CD4-positive, alpha-beta memory T cell (primary cell): ENCODE measurements at regions of chr15 and their contacts with region 1.

Region 1: DNA sequence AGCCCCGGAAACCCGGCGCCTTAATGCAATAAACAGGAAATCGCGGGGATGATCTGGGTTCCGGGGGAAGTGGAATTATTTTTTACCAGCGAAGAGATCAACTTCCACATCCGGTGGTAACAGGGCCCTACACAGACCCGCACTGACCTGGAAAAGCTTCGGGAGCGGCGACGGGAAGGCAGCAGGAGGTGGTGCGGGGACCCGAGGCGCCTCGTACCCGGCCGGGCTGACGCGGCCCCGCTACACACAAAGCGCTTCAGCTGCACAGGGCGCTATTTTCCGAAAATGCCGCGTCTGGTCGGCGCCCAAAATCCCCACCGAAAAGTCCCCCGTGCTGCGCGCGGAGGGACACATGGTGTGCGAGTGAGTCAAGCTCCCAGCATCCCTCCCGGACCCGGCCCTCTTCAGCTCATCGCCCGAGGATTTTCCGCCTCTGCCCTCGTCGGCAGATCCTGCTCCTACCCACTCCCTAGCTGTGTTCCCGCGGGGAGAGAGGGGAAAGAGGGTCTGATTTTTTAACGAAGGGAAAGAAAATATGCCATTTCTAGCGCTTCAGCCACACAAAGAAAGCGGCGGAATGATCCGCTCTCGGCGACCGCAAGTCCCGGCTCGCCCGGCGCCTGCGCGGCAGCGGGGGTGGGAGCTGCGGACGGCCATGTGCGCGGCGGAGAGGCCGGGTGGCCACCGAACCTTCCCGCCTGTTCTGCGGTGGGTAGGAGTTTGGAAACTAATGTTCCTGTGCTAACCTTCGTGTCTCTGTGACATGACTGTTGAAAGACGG is at the start of gene GABPB1:
- DNase-seq: peak; percentile 87 to 93 (median 92)
- H3K4me3 ChIP-seq: peak within 1 kb of the TSS; percentile 80 to 95
- H3K4me3 Mint-ChIP-seq: peak within 1 kb of the TSS; percentile 97 to 100 (median 99)
- H3K27ac ChIP-seq: peak within 1 kb of the TSS; percentile 99
- H3K27ac Mint-ChIP-seq: peak within 1 kb of the TSS; percentile 99 to 100 (median 99)
- H3K4me1 ChIP-seq: peaks cover 56% of the 10 kb centered on the region
- H3K4me1 Mint-ChIP-seq: peaks cover 38 to 77% (median 46%) of the 10 kb centered on the region in 4 donors
- H3K27me3 ChIP-seq: no peaks in the 10 kb centered on the region
- H3K27me3 Mint-ChIP-seq: peaks cover 0 to 2% of the 10 kb centered on the region in 2 donors
- total RNA-seq, gene GABPB1: 15.1 to 17.0 TPM

Region 2: GRCh38 chr15:48877630-48878595 is 1477.1 kb before region 1 on chr15 and contains the start of gene EID1:
- CTCF ChIA-PET with region 1: no interaction called
- POLR2A ChIA-PET with region 1: interaction called, 19 read pairs
- intact Hi-C with region 1: loop called (anchors 5 kb)
- DNase-seq: peak; percentile 93 to 95 (median 94)
- H3K4me3 ChIP-seq: peak within 1 kb of the TSS; percentile 74 to 96
- H3K4me3 Mint-ChIP-seq: peak within 1 kb of the TSS; percentile 96 to 100 (median 98)
- H3K27ac ChIP-seq: peak within 1 kb of the TSS; percentile 71
- H3K27ac Mint-ChIP-seq: peak within 1 kb of the TSS; percentile 97 to 100 (median 99)
- H3K4me1 ChIP-seq: peaks cover 26% of the 10 kb centered on the region
- H3K4me1 Mint-ChIP-seq: peaks cover 18 to 31% (median 24%) of the 10 kb centered on the region in 4 donors
- H3K27me3 ChIP-seq: no peaks in the 10 kb centered on the region
- H3K27me3 Mint-ChIP-seq: peaks cover 3 to 4% of the 10 kb centered on the region in 2 donors
- total RNA-seq, gene EID1: 76.0 to 91.2 TPM

Region 3: DNA sequence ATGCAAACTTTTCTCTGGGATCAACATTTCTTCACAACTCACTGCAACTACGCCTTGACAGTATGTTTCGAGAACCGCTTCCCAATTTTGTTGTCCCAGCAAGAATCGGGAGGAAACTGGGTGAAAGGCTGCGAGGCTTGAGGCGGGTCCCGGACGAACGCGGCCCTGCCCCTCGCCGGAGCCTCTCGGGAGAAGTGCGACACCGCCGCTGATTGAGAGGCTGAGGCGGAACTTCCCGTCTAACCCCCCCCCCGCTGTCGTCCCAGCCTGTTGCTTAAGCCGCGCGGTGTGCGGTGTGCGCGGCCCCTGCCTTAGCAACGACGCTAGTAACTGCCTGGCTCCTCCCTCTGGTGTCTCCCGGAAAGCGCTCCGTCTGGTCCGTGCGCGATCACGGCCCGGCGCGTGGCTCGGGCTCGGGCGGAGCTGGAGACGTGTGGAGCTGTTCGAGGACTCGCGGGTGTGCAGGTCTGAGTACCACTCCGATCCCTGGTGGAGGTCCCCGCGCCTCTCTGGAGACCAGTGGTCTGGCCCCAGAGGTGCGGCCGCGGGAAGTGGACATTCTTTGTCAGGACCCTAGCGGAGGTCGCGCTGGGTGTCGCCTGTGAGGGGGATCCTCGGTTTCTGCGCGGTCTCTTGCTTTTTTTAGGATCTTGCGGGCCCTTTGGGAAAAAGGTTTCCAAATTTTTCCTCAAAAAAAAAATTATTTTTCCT is 734.2 kb before region 1 on chr15 and contains the starts of genes DTWD1 and FAM227B:
- CTCF ChIA-PET with region 1: no interaction called
- POLR2A ChIA-PET with region 1: interaction called, 23 read pairs
- intact Hi-C with region 1: loop called (anchors 1 kb)
- DNase-seq: peak; percentile 92 to 96 (median 93)
- H3K4me3 ChIP-seq: peak within 1 kb of the TSS; percentile 80 to 92
- H3K4me3 Mint-ChIP-seq: peak within 1 kb of the TSS; percentile 95 to 99 (median 98)
- H3K27ac ChIP-seq: peak within 1 kb of the TSS; percentile 71
- H3K27ac Mint-ChIP-seq: peak within 1 kb of the TSS; percentile 98 to 99 (median 99)
- H3K4me1 ChIP-seq: peaks cover 22% of the 10 kb centered on the region
- H3K4me1 Mint-ChIP-seq: peaks cover 25 to 51% (median 37%) of the 10 kb centered on the region in 4 donors
- H3K27me3 ChIP-seq: no peaks in the 10 kb centered on the region
- H3K27me3 Mint-ChIP-seq: no peaks in the 10 kb centered on the region
- total RNA-seq, gene DTWD1: 28.7 to 29.9 TPM
- total RNA-seq, gene FAM227B: 11.5 to 13.6 TPM

Region 4: GRCh38 chr15:50055332-50055731 is 299.7 kb before region 1 on chr15:
- CTCF ChIA-PET with region 1: no interaction called
- POLR2A ChIA-PET with region 1: no interaction called
- intact Hi-C with region 1: no loop called
- DNase-seq: no peak
- H3K4me3 ChIP-seq: no peak overlapping the region
- H3K4me3 Mint-ChIP-seq: no peak overlapping the region
- H3K27ac ChIP-seq: no peak overlapping the region
- H3K27ac Mint-ChIP-seq: no peak overlapping the region
- H3K4me1 ChIP-seq: no peaks in the 10 kb centered on the region
- H3K4me1 Mint-ChIP-seq: no peaks in the 10 kb centered on the region
- H3K27me3 ChIP-seq: no peaks in the 10 kb centered on the region
- H3K27me3 Mint-ChIP-seq: peaks cover 3 to 6% of the 10 kb centered on the region in 2 donors

Region 5: DNA sequence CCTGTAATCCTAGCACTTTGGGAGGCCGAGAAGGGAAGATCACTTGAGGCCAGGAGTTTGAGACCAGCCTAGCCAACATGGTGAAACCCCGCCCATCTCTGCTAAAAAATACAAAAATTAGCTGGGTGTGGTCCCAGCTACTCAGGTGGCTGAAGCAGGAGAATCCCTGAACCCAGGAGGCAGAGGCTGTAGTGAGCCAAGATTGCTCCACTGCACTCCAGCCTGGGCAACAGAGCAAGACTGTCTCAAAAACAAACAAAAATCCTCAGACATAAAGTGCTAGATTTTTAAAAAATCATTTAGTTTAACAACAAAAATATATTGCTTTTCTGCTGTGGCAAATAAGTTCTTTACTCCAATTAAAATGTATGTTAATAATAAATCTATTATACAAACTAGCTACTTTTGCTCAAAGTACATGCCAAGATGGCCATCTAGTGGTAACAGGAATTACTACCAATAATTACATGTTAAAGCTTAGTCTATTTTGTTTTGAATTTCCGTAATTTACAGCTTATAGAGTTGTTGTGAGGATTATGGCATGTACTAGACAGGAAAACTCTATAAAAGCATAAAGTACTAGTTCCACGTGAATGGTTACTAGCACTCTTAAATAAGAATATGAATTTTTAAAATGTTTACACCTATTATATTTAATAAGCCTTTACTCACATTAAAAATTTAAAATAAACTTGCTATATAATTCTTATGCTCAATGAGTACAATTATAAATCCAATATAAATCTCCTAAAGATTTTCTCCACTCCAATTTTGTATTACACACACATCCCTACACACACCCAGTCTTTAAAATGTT is 39.0 kb before region 1 on chr15:
- CTCF ChIA-PET with region 1: interaction called, 9 read pairs
- POLR2A ChIA-PET with region 1: interaction called, 20 read pairs
- intact Hi-C with region 1: loop called (anchors 1 kb)
- DNase-seq: peak in 4 of 5 donors; percentile 35 to 50 (median 42)
- H3K4me3 ChIP-seq: no peak overlapping the region
- H3K4me3 Mint-ChIP-seq: no peak overlapping the region
- H3K27ac ChIP-seq: no peak overlapping the region
- H3K27ac Mint-ChIP-seq: no peak overlapping the region
- H3K4me1 ChIP-seq: peaks cover 17% of the 10 kb centered on the region
- H3K4me1 Mint-ChIP-seq: peaks cover 15 to 21% (median 17%) of the 10 kb centered on the region in 4 donors
- H3K27me3 ChIP-seq: no peaks in the 10 kb centered on the region
- H3K27me3 Mint-ChIP-seq: no peaks in the 10 kb centered on the region

Region 6: DNA sequence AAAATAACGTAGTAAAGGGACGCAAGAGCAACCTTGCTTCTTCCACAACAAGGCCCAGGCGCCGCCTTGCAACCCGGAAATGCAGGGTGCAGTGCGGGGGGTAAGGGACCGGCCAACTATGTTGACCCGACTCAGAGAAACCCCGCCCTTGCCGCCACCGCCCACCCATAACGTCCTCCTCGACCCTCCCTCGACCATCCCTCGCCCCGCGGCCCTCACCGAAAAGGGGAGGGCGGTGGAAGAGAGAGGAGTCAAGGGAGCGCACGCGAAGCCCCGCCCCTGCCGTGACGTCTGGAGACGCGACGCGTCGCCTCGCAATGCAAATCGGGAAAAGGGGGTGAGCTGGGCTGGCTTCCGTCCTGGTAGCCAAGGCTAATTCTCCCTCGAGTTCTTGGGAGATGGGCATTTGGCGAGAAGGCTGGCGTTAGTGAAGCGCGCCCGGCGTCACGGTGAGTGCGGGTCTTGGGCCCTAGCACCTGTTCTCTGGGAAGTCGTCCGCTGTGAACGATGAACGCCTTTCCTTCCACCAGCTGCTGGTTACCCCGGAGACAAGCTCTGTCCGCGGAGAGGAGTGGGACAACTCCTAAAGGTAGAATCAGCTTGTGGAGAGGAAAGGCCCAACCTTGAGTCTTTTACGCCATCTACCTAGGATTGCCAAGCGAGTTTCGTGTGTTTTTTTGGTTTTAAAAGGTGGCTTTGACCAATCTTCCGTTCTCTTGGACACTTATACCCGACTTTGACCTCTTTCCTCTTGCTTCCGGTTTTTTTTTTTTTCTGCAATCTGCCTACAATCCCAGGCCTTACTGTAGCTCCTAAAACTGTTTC is 69.2 kb after region 1 on chr15 and contains the start of gene USP8:
- CTCF ChIA-PET with region 1: no interaction called
- POLR2A ChIA-PET with region 1: interaction called, 143 read pairs
- intact Hi-C with region 1: loop called (anchors 1 kb)
- DNase-seq: peak; percentile 90 to 93 (median 92)
- H3K4me3 ChIP-seq: peak within 1 kb of the TSS; percentile 99
- H3K4me3 Mint-ChIP-seq: peak within 1 kb of the TSS; percentile 96 to 100 (median 98)
- H3K27ac ChIP-seq: peak within 1 kb of the TSS; percentile 94
- H3K27ac Mint-ChIP-seq: peak within 1 kb of the TSS; percentile 98 to 100 (median 99)
- H3K4me1 ChIP-seq: peaks cover 32% of the 10 kb centered on the region
- H3K4me1 Mint-ChIP-seq: peaks cover 13 to 53% (median 32%) of the 10 kb centered on the region in 4 donors
- H3K27me3 ChIP-seq: no peaks in the 10 kb centered on the region
- H3K27me3 Mint-ChIP-seq: no peaks in the 10 kb centered on the region
- total RNA-seq, gene USP8: 68.9 to 70.9 TPM

Region 7: GRCh38 chr15:50484781-50485180 is 129.8 kb after region 1 on chr15:
- CTCF ChIA-PET with region 1: no interaction called
- POLR2A ChIA-PET with region 1: no interaction called
- intact Hi-C with region 1: no loop called
- DNase-seq: no peak
- H3K4me3 ChIP-seq: no peak overlapping the region
- H3K4me3 Mint-ChIP-seq: no peak overlapping the region
- H3K27ac ChIP-seq: no peak overlapping the region
- H3K27ac Mint-ChIP-seq: peak overlapping the region in 1 of 7 donors; percentile 31
- H3K4me1 ChIP-seq: no peaks in the 10 kb centered on the region
- H3K4me1 Mint-ChIP-seq: peaks cover 0 to 12% (median 6%) of the 10 kb centered on the region in 4 donors
- H3K27me3 ChIP-seq: no peaks in the 10 kb centered on the region
- H3K27me3 Mint-ChIP-seq: no peaks in the 10 kb centered on the region

Region 8: DNA sequence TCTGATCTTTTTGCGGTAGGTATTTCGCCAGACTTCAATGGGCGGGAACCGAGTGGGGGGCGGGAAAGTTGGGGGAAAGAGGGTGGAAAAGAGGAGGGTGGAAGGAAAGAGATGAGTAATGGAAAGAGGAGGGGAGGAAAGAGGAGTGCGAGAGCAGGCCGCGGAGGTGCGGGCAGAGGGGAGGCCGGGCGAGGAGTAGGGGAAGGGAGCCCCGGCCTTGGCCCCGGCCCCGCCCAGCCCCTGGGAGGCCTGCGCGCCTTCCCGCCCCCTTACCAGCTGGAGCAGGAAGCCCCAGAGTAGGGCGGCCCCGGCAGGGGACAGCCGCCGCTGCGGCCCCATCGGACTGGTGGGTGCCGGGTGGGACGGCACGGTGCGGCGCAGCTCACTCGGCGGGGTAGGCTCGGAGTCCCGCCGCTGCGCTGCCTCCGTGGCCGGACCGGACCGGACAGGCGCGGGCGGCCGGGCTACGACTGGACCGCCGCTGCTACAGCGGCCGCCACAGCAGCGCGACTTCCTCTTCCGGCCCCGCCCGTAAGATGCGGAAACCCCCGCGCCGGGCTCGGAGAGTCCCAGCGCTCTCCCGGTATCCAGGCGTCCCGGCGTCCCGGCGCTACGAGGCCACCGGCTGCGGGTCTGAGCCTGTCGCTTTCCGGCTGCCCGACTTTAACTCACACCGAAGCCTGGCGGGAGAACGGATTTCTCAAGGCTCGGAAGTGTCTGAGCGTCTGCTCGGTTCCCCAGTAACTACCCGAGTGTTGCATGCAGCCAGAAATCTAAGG is 410.4 kb after region 1 on chr15 and contains the start of gene SPPL2A:
- CTCF ChIA-PET with region 1: no interaction called
- POLR2A ChIA-PET with region 1: interaction called, 12 read pairs
- intact Hi-C with region 1: loop called (anchors 10 kb)
- DNase-seq: peak; percentile 71 to 84 (median 73)
- H3K4me3 ChIP-seq: peak within 1 kb of the TSS; percentile 85 to 91
- H3K4me3 Mint-ChIP-seq: peak within 1 kb of the TSS; percentile 87 to 97 (median 94)
- H3K27ac ChIP-seq: peak within 1 kb of the TSS; percentile 93
- H3K27ac Mint-ChIP-seq: peak within 1 kb of the TSS; percentile 94 to 98 (median 97)
- H3K4me1 ChIP-seq: peaks cover 24% of the 10 kb centered on the region
- H3K4me1 Mint-ChIP-seq: peaks cover 31 to 54% (median 44%) of the 10 kb centered on the region in 4 donors
- H3K27me3 ChIP-seq: no peaks in the 10 kb centered on the region
- H3K27me3 Mint-ChIP-seq: no peaks in the 10 kb centered on the region
- total RNA-seq, gene SPPL2A: 75.2 to 80.3 TPM